ENCODE measurements at regions of chr9 and their contacts with region 1.

Region 1: DNA sequence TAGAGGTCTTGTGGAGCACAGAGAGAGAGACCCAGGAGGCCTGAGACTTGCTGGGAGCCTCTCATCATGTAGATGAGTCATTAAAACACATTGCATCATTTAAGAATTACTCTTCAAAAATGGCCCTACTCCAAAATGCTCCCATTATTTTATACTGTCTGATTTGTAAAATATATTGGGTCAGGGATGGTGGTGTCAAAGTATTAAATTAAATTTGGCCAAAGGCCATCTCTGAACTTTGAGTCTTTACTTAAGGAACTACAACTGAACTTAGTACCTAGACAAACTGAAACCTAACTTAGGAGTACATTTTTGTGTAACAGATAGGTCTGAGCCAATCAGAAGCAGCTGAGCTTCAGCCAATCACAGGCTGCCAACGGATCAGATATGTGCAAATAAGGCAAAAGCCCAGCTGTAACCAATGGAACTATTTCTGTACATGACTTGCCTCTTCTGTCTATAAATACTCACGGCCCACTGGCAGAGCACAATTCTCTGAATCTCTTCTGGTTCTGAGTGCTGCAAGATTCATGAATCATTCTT is 657.2 kb downstream of the TLE1 start:
- DNase-seq: peak; percentile 82

Region 2: GRCh38 chr9:81052846-81053245 is 20.7 kb after region 1 on chr9:
- intact Hi-C with region 1: no loop called
- DNase-seq: no peak

Region 3: DNA sequence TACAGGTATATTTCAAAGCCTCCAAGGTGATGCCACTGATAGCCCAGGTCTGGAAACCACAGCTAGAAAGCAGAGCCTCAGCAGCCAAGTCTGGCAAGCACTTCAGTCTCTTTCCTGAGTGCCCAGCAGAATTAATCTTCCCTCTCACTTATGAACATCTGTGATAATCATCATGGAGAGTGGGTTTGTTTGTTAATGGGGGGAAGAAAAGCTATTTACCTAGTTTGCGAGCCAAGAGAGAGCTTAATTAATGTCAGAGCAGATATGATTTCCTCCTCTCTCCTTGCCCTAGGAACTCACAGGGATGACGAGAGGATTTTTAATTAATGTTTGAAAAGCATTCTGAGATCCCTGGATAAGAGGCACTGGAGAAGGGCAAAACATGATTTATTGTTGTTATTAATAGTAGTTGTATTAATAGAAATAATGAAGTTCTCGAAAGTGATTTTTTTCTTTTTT is 289.0 kb after region 1 on chr9:
- intact Hi-C with region 1: loop called in 1 of 2 experiments (anchors 10 kb)
- DNase-seq: no peak

Region 4: GRCh38 chr9:81456431-81457006 is 424.4 kb after region 1 on chr9:
- intact Hi-C with region 1: no loop called
- DNase-seq: no peak

Measured in posterior vena cava (tissue), 2 donors.